GM18951 (cell line): ENCODE measurements at regions of chr14 and their contacts with region 1.

Region 1: DNA sequence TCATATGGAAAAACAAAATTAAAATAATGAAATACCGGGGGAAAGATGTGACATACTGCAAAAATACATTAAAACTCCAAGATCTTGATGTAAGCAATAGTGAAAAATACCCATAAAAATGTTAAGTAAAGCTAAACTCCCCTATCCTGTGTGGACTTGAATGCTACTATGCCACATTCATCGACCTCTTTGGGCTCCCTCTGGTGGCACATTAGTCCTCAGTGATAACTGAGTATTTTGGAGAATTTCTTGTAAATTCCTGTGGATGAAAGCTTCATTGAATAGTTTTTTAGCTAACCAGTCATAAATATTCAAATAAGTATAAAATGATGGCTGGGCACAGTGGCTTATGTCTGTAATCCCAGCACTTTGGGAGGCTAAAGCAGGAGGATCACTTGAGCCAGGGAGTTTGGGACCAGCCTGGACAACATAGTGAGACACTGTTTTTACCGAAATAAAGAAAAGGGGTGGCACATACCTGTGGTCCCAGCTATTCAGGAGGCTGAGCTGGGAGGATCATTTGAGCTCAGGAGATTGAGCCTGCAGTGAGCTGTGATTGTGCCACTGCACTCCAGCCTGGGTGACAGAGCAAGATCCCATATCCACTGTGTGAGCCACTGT is 42.4 kb upstream of the SGPP1 start:
- POLR2A ChIP-seq: no peak

Region 2: DNA sequence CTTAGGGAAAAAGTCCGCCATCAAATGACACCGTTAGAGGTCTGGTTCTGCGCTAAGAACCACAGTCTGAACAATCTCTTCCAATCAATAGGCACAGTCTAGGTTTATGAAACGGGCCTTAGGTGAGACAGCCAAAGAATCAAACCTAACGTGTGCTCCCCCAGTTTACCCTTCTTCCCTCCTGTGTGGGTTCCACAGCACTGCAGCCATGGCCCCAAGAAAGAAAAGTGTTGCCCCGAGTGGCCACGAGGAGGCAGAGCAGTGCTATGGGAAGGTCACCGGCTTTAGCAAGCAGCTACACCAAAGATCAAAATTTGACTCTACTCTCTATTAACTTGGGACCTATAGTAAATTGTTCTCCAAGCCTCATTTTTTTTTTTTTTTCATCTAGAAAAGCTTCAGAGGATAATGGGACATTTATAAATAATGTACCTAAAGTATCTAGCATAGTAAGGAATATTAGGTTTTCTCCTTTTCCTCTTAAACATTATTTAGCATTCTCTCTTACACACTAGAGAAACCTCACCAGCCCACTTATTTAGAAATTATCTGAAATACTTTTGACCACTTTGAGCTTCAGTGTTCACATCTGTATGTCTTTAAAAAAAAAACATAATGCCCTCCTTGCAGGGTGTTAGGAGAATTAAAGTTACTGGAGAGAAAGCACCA is 381.4 kb before region 1 on chr14:
- in situ Hi-C with region 1: loop called (anchors 25 kb)
- POLR2A ChIP-seq: no peak

Region 3: GRCh38 chr14:63632932-63633514 is 137.3 kb before region 1 on chr14:
- in situ Hi-C with region 1: loop called (anchors 10 kb)
- POLR2A ChIP-seq: no peak

Region 4: GRCh38 chr14:64503478-64504309 is 733.4 kb after region 1 on chr14 and contains the start of gene ZBTB25:
- in situ Hi-C with region 1: no loop called
- POLR2A ChIP-seq: peak; percentile 66